ENCODE measurements at regions of chr16 and their contacts with region 1.

Region 1: GRCh38 chr16:87375426-87376135 is 8.0 kb downstream of the FBXO31 start:
- DNase-seq: no peak
- H3K4me3 ChIP-seq: no peak overlapping the region
- H3K27ac ChIP-seq: no peak overlapping the region
- H3K4me1 ChIP-seq: peaks cover 7% of the 10 kb centered on the region
- H3K27me3 ChIP-seq: no peaks in the 10 kb centered on the region
- CTCF ChIP-seq: no peak

Region 2: GRCh38 chr16:87324411-87325275 is 50.9 kb before region 1 on chr16:
- intact Hi-C with region 1: loop called (anchors 5 kb)
- DNase-seq: no peak
- H3K4me3 ChIP-seq: no peak overlapping the region
- H3K27ac ChIP-seq: no peak overlapping the region
- H3K4me1 ChIP-seq: no peaks in the 10 kb centered on the region
- H3K27me3 ChIP-seq: no peaks in the 10 kb centered on the region
- CTCF ChIP-seq: peak; percentile 83

Region 3: GRCh38 chr16:87416826-87417527 is 41.4 kb after region 1 on chr16:
- intact Hi-C with region 1: no loop called
- DNase-seq: peak; percentile 43
- H3K4me3 ChIP-seq: no peak overlapping the region
- H3K27ac ChIP-seq: no peak overlapping the region
- H3K4me1 ChIP-seq: no peaks in the 10 kb centered on the region
- H3K27me3 ChIP-seq: no peaks in the 10 kb centered on the region
- CTCF ChIP-seq: peak; percentile 64

Measured in colonic mucosa (tissue), 4 donors.